Motor neuron (in vitro differentiated cells): ENCODE measurements at regions of chr20 and their contacts with region 1.

Region 1: DNA sequence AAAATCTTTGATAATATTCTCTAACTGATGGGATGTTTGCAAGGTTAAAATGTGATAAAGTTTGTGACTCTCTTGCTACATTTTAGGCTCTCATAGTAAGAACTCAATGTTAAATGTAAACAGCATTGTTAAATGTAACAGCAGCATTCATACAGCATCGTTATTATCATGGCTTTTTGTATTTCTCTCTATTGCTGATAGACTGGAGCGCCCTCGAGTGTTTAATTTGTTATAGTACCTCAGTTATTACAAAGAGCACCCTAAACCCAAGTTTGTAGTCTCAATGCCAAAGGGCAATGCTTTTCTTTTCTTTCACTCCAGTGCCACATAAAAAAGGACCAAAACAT is 14.9 kb upstream of the TTPAL start:
- ATAC-seq: peak in 4 of 8 experiments; percentile 49 to 77 (median 71)
- H3K4me3 ChIP-seq: no peak overlapping the region
- H3K27ac ChIP-seq: no peak overlapping the region
- H3K4me1 ChIP-seq: no peaks in the 10 kb centered on the region

Region 2: DNA sequence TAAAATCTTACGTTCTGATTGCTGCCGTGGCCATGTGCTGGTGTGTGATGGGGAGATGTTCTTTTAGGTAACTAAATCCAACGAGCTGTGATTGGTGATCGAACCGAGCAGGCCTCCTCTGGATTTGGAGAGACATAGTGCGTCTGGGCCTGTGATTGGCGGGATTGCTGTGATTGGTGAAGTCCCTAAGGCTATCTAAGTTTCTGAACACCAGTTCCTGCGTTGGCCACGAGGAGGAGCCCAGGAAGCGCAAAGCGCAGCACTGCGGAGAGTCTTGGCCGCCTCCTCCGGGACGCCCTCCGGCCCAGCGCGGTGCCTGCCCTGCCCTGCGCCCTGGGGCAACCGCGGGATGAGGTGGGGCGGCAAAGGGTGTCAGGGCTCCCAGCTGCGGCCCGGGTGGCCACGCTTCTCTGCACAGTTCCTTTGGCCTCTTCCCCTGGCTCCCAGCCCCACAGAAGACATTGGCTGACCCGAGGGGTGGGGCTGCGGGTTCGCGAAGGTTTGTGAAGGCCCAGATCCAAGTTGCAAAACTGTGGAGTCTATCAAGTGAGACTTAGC is 72.2 kb before region 1 on chr20:
- in situ Hi-C with region 1: loop called in 1 of 9 experiments (anchors 5 kb)
- ATAC-seq: peak in 6 of 8 experiments; percentile 32 to 95 (median 76)
- H3K4me3 ChIP-seq: no peak overlapping the region
- H3K27ac ChIP-seq: no peak overlapping the region
- H3K4me1 ChIP-seq: no peaks in the 10 kb centered on the region